Sciatic nerve (tissue), 2 donors: ENCODE measurements at regions of chr6 and their contacts with region 1.

Region 1: GRCh38 chr6:39083231-39083634 is 31.8 kb downstream of the SAYSD1 start:
- DNase-seq: no peak
- ATAC-seq: no peak

Region 2: GRCh38 chr6:38350942-38351341 is 732.3 kb before region 1 on chr6:
- intact Hi-C with region 1: loop called (anchors 5 kb)
- DNase-seq: no peak
- ATAC-seq: peak; percentile 55

Region 3: DNA sequence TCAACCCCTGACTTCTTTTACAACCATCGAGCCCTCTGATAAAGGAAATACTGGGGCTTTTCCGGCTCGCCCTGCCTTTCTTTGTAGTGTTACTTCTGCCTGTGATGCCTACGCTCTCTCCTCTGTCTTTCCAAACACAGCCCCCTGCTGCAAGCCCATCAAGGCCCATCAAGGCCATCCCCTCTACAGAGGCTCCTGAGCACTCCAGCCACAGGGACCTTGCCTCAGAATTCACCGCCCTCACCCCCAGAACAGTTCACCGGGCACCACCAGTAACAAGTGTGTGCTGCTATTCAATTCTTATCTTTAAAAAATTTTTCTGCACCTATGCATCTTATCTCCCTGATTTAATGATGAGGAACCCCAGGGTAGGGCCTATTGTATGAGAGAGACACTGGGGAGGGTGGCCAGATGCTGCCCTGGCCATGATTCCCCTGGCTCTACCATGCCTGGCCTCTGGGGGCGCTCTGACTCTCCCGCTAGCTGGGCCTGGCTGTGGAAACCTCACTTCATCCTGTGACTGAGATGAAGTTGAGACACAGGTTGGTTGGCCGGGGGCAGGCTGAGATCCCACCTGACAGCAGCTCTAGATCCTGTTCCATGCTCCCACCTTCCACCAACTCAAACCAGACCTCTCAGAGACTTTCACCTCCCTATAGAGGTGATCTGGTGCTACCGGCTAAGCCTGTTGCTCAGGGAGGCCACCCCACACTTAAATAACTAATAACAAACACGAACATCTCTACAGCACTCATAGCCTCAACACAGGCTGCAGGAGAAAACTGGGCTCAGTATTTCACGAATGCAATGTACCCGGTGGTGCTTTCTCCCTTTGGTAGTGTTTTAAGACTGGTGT is 53.8 kb before region 1 on chr6:
- intact Hi-C with region 1: no loop called
- DNase-seq: no peak
- ATAC-seq: no peak

Region 4: GRCh38 chr6:39446909-39447308 is 363.7 kb after region 1 on chr6:
- intact Hi-C with region 1: no loop called
- DNase-seq: no peak
- ATAC-seq: no peak